ENCODE measurements at regions of chr15 and their contacts with region 1.

Region 1: GRCh38 chr15:33322091-33322490 is 11.3 kb downstream of the RYR3 start:
- DNase-seq: no peak
- ATAC-seq: no peak
- H3K4me3 ChIP-seq: no peak overlapping the region
- H3K27ac ChIP-seq: no peak overlapping the region
- H3K4me1 ChIP-seq: no peaks in the 10 kb centered on the region
- H3K27me3 ChIP-seq: peaks cover 0 to 14% (median 0%) of the 10 kb centered on the region in 7 donors
- CTCF ChIP-seq: no peak

Region 2: DNA sequence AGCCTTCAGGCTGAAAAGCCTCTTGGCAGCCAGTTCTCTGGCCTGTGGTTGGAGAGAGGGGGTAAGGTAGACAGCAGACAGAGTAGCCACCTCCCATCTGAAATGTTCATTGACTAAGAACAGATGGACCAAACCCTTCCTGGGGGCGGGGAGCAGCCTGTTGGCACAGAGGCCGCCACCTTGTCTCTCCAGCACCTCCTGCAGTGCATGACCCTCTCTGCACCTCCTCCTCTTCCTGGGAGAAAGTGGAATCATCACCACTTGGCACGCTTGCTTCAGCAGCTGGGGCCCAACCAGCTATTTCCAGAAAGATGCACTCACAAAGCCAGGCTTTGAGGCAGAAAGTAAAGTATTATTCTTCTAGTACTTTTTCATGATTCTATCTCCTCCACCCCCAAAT is 332.8 kb after region 1 on chr15:
- intact Hi-C with region 1: loop called in 1 of 10 experiments (anchors 10 kb)
- DNase-seq: no peak
- ATAC-seq: no peak
- H3K4me3 ChIP-seq: no peak overlapping the region
- H3K27ac ChIP-seq: no peak overlapping the region
- H3K4me1 ChIP-seq: no peaks in the 10 kb centered on the region
- H3K27me3 ChIP-seq: peaks cover 0 to 7% (median 0%) of the 10 kb centered on the region in 7 donors
- CTCF ChIP-seq: no peak